ENCODE measurements at regions of chr14 and their contacts with region 1.

Region 1: DNA sequence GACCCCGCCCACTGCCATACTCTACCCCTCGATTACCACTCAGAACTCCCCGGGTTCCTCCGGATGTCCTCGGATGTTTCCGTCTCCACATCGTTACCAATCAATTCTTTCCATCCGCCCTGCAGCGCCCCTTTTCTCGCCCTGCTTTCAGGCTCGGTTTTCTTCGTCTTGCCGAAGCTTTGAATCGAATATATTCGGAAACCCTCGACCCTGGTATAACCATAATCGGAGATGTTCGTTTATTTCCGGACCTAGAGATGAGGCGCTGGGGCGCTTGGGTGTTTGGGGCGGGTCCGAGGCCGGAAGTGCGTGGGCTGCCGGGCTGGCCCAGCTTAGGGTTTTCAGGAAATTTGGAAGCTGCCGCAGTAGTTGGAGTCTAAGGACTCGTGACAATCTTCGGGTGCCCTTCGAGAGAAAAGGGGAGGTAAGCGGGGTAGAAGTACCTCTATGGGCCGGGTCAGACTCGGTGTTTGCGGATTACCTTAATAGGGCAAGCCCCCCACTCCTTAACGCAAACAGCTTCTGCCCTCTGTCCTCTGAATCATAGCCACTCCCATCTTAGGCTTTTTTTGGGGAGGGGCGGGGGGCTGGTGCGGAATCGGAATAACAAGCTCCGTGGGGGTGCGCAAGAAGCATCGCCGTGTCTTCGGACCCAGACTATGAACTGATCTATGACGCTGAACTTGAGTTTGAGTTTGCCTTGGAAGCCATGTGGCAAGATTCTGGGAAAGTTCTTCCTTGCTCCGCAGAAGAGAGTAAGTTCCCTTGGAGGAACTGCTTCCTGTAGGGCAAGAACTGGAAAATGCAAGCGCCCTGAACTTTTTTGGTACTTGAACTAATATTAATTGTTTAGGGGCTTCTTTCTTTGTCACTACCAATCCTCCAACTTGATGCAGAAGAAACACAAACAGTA is at the start of gene C14orf119:
- DNase-seq: peak in 34 of 35 experiments; percentile 98 to 100 (median 99)
- ATAC-seq: peak; percentile 87 to 89 (median 88)
- H3K4me3 ChIP-seq: peak within 1 kb of the TSS; percentile 77 to 91
- H3K4me3 Mint-ChIP-seq: no peak within 1 kb of the TSS
- H3K27ac ChIP-seq: peak within 1 kb of the TSS; percentile 94
- H3K27ac Mint-ChIP-seq: no peak within 1 kb of the TSS
- H3K4me1 ChIP-seq: peaks cover 18 to 23% of the 10 kb centered on the region in 2 experiments
- H3K4me1 Mint-ChIP-seq: peaks cover 26 to 55% (median 32%) of the 10 kb centered on the region in 3 donors
- H3K27me3 ChIP-seq: no peaks in the 10 kb centered on the region
- H3K27me3 Mint-ChIP-seq: no peaks in the 10 kb centered on the region
- total RNA-seq, gene C14orf119: 9.5 to 47.7 (median 43.6) TPM

Region 2: GRCh38 chr14:22929104-22929847 is 166.2 kb before region 1 on chr14 and contains the start of gene PRMT5:
- CTCF ChIA-PET with region 1: interaction called in 1 of 2 experiments, 13 read pairs
- POLR2A ChIA-PET with region 1: interaction called in 1 of 2 experiments, 5 read pairs
- DNase-seq: peak; percentile 93 to 100 (median 98)
- ATAC-seq: peak; percentile 95 to 97 (median 97)
- H3K4me3 ChIP-seq: peak within 1 kb of the TSS; percentile 97 to 99
- H3K4me3 Mint-ChIP-seq: no peak within 1 kb of the TSS
- H3K27ac ChIP-seq: peak within 1 kb of the TSS; percentile 89
- H3K27ac Mint-ChIP-seq: no peak within 1 kb of the TSS
- H3K4me1 ChIP-seq: peaks cover 9 to 20% of the 10 kb centered on the region in 2 experiments
- H3K4me1 Mint-ChIP-seq: peaks cover 5 to 19% (median 11%) of the 10 kb centered on the region in 3 donors
- H3K27me3 ChIP-seq: no peaks in the 10 kb centered on the region
- H3K27me3 Mint-ChIP-seq: no peaks in the 10 kb centered on the region
- total RNA-seq, gene PRMT5: 17.7 to 45.3 (median 37.5) TPM

Region 3: DNA sequence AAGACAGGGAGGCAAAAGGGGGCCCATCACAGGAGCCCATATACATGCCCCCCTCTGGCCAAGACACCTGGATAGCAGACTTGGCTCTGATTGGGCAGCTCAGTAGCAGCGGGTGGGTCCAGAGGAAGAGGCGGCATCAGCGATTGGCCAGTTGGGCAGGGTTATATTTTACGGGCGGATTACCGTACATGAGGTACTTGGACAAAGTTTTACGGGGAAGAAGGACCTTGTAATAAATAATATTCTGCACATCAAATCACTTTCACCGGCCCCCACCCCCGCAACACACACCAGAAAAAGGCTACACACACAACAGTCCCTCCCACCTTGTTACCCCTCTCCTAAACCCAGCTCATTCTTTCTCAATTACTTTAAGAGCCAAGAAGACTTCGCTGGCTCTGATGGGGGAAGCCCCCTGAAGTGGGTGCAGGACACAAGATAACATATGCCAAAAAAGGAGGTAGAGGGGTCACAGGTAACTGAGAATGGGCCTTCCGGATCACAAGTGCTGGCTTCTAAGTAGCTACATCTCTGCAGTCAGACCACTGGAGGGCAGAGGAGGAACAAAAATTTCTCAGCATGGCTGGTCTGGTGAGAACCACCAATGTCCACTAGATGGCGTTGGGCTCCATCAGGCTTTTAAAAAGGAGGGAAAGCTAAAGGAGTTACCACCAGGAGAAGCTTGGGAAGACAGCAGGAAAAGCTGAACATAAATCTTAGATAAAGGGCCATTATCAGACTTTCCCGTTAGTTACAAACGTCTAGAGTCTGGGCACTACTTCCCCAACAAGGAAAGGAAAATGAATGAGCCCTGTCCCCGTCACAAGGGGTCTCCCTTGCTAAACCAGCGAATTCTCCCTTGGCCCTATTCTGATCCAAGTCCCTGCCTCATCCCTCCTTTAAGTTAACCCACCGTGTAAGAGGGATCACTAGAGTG is 26.7 kb before region 1 on chr14:
- CTCF ChIA-PET with region 1: interaction called, 5 to 46 read pairs
- POLR2A ChIA-PET with region 1: interaction called, 3 to 9 read pairs
- DNase-seq: peak; percentile 40 to 90 (median 66)
- ATAC-seq: peak; percentile 76 to 86 (median 79)
- H3K4me3 ChIP-seq: no peak overlapping the region
- H3K4me3 Mint-ChIP-seq: peak overlapping the region; percentile 17 to 34 (median 31)
- H3K27ac ChIP-seq: peak overlapping the region; percentile 38
- H3K27ac Mint-ChIP-seq: peak overlapping the region; percentile 61
- H3K4me1 ChIP-seq: peaks cover 12 to 37% of the 10 kb centered on the region in 2 experiments
- H3K4me1 Mint-ChIP-seq: peaks cover 35 to 45% (median 41%) of the 10 kb centered on the region in 3 donors
- H3K27me3 ChIP-seq: no peaks in the 10 kb centered on the region
- H3K27me3 Mint-ChIP-seq: no peaks in the 10 kb centered on the region

Region 4: GRCh38 chr14:23120541-23121251 is 25.2 kb after region 1 on chr14:
- CTCF ChIA-PET with region 1: interaction called in 1 of 2 experiments, 18 read pairs
- POLR2A ChIA-PET with region 1: interaction called in 1 of 2 experiments, 3 read pairs
- DNase-seq: peak; percentile 33 to 88 (median 61)
- ATAC-seq: peak; percentile 58 to 71 (median 64)
- H3K4me3 ChIP-seq: peak overlapping the region; percentile 10 to 36
- H3K4me3 Mint-ChIP-seq: peak overlapping the region; percentile 52 to 81 (median 56)
- H3K27ac ChIP-seq: peak overlapping the region; percentile 77
- H3K27ac Mint-ChIP-seq: peak overlapping the region; percentile 96 to 99
- H3K4me1 ChIP-seq: peaks cover 32 to 53% of the 10 kb centered on the region in 2 experiments
- H3K4me1 Mint-ChIP-seq: peaks cover 55 to 58% (median 57%) of the 10 kb centered on the region in 3 donors
- H3K27me3 ChIP-seq: peaks cover 0 to 4% of the 10 kb centered on the region in 2 experiments
- H3K27me3 Mint-ChIP-seq: peaks cover 0 to 3% of the 10 kb centered on the region in 2 donors

Region 5: DNA sequence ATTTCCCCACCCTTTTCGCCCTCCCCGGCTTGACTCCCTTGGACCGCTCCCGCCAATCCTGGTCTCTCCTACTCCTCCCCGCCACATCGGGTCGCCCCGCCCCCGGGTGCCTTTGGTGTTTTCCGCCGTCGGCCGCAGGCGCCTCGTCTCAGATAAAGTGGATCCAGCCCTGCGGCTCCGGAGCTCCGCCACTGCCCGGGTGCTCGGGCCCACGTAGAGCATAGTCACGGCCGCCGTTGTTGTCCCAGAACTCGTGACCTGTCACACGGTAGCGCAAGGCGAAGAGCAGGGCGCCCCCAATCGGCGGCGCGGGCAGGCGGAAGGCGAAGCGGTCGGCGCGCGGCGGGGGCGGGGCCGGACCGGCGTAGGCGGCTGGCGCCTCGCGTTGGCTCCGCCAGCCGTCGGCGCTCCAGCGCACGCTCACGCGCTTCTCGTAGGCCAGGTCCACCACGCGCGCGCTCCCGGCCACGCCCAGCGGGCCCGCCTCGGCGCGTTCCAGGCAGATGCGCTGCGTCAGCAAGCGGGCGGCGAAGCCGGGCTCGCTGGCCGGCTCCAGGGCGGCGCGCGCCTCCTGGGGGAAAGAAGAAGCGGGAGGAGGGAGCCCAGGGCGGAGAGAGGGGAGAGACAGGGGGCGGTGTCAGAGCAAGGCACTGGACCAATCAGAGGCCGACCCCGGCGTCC is 206.0 kb after region 1 on chr14:
- CTCF ChIA-PET with region 1: interaction called in 1 of 2 experiments, 12 read pairs
- POLR2A ChIA-PET with region 1: interaction called in 1 of 2 experiments, 3 read pairs
- DNase-seq: peak; percentile 91 to 99 (median 96)
- ATAC-seq: peak; percentile 75 to 82 (median 76)
- H3K4me3 ChIP-seq: peak overlapping the region; percentile 74 to 85
- H3K4me3 Mint-ChIP-seq: peak overlapping the region; percentile 92 to 100 (median 92)
- H3K27ac ChIP-seq: peak overlapping the region; percentile 96
- H3K27ac Mint-ChIP-seq: peak overlapping the region; percentile 93 to 94
- H3K4me1 ChIP-seq: peaks cover 9 to 26% of the 10 kb centered on the region in 2 experiments
- H3K4me1 Mint-ChIP-seq: peaks cover 15 to 34% (median 30%) of the 10 kb centered on the region in 3 donors
- H3K27me3 ChIP-seq: peaks cover 0 to 10% of the 10 kb centered on the region in 2 experiments
- H3K27me3 Mint-ChIP-seq: peaks cover 11 to 12% of the 10 kb centered on the region in 2 donors